Sciatic nerve (tissue), 2 donors: ENCODE measurements at regions of chr19 and their contacts with region 1.

Region 1: DNA sequence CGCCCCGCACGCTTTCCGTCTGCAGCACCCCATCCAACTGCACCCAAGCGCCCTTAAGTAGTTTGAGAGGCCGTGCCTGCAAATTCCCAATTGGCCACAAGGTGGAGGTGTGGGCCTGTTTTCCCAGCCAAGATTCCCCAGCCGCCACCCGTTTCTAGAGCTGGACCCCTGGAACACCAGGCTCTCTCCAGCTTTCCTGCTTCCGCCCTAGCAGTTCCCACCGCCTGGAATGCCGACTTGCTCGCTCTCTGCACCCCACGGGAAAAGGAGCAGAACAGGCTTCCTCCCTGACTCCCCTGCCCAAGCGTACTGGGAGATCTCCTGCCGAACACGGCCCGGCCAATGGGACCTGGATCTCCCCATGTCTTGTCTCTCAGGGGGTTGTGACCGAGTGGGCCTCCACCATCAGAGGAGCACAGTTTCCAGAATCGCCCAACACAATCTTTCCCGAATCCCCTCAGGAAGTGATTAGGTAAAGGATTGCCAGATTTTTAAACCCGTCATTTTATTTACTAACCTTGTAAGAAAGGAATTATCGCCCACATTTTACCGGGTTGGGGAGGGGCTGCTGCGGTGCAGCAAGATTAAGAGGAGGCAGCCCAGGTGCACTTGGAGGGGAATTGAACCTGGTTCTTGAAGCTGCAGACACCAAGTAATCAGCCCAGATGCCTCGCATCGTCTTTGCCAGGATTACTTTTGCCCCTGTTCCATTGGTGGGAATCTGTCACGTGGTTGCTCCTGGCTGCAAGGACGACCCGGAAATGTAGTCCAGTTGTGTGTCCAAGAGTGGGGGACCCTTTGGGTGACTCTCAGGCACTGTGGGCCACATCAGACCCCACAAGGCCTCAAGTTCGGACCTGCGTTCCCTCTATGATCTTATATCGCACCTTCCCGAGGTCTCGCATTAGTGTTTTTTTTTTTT is 3.5 kb upstream of the NAPSA start:
- DNase-seq: peak; percentile 89
- ATAC-seq: peak; percentile 97

Region 2: DNA sequence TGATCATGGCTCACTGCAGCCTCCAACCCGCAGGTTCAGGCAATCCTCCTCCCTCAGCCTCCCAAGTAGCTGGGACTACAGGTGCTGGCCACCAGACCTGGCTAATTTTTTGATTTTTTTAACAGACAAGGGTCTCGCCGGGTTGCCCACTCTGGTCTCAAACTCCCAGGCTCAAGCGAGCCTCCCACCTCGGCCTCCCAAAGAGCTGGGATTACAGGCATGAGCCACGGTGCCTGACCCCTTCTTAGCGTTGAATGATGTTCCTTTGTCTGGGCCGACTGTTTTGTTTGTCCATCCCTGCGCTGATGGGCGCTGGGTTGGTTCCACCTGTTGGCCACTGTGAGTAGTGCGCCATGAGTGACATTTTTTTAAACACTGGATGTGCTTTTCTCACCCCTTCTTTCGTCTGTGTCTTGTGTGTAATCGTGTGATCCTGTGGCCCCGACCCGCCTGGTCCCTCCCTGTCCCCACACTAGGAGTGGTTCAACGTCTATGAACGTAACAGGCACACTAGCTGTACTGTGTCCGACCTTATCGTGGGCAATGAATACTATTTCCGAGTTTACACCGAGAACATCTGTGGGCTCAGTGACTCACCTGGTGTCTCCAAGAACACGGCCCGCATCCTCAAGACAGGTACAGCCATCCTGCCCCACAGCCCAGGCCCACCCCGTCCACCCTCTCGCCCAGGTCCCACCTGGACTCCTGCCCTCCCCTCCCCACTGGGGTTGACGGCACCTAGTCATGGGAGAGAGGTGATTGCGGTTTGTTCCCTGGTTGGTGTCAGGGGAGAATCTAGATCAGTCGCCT is 92.4 kb after region 1 on chr19:
- intact Hi-C with region 1: loop called (anchors 5 kb)
- DNase-seq: peak; percentile 77
- ATAC-seq: peak; percentile 80

Region 3: GRCh38 chr19:50779504-50780457 is 410.9 kb after region 1 on chr19:
- intact Hi-C with region 1: loop called (anchors 5 kb)
- DNase-seq: no peak
- ATAC-seq: no peak